ENCODE measurements at regions of chr2 and their contacts with region 1.

Region 1: DNA sequence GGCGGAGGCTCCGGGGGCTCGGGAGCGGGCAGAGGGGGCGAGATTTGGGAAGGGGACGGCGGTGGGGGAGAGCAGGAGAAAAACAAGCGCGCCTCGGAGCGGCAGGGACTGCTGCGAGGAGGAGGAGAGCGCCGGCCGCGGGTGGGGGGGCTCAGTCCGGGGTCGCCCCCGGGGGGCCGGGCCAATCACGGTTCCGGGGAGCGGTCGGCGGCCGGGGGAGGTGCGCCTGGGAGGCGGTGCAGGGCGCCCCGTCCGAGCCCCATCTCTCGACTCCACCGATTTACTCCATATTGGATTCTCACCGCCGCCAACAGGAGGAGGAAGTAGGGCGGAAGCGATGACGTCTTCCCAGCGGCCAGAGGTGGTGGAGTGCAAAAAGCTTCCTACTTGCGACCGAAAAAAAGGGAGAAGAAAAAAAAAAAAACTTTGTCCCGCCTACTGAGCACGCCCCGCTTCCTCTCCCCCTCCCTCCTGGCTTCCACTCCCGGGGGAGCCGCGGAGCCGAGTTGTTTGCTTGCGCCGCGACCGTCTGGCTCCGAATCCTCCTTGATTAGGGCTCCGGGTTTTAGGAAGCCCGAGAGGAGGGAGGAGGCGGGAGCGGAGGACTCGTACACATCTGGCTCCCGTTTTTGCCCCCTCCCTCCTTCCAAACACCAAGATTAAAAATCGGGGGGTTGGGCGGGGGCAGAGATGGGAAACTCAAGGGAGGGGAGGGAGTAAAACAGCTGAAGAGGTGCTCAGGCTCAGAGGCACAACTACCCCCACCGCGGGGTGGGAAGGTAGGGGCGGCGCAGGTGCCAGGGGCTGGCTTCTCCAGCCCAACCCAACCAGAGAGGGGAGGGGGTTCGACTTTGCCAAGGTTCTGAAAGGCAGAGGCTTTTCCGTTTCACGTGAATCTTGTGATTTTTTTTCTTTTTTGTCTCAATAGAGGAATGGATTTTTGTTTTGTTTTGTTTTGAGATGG is at the start of gene SPRED2:
- DNase-seq: peak; percentile 96
- ATAC-seq: peak; percentile 58
- H3K4me3 ChIP-seq: peak within 1 kb of the TSS; percentile 94 to 98 (median 98)
- H3K27ac ChIP-seq: peak within 1 kb of the TSS; percentile 86
- H3K4me1 ChIP-seq: peaks cover 56% of the 10 kb centered on the region
- H3K27me3 ChIP-seq: no peaks in the 10 kb centered on the region
- CTCF ChIP-seq: peak; percentile 13; the same call in 1 of the 2 replicates
- EP300 ChIP-seq: peak; percentile 73 to 82
- POLR2A ChIP-seq: peak; percentile 73 to 82
- RAD21 ChIP-seq: no peak; the same call in 1 of the 2 replicates
- total RNA-seq, gene SPRED2: 13.0 and 17.7 TPM in 2 replicates

Region 2: GRCh38 chr2:65129826-65130663 is 302.5 kb before region 1 on chr2 and contains the start of gene RAB1A:
- CTCF ChIA-PET with region 1: no interaction called
- POLR2A ChIA-PET with region 1: interaction called, 7 read pairs
- in situ Hi-C with region 1: no loop called
- intact Hi-C with region 1: loop called (anchors 1 kb)
- DNase-seq: peak; percentile 99
- ATAC-seq: peak; percentile 98
- H3K4me3 ChIP-seq: peak within 1 kb of the TSS; percentile 89 to 98 (median 97)
- H3K27ac ChIP-seq: peak within 1 kb of the TSS; percentile 95
- H3K4me1 ChIP-seq: peaks cover 69% of the 10 kb centered on the region
- H3K27me3 ChIP-seq: peaks cover 0 to 4% of the 10 kb centered on the region in 2 experiments; a peak in 1 of 5 replicates
- CTCF ChIP-seq: peak; percentile 80
- EP300 ChIP-seq: no peak
- POLR2A ChIP-seq: peak; percentile 88 to 93
- RAD21 ChIP-seq: no peak
- total RNA-seq, gene RAB1A: 206 and 311 TPM in 2 replicates

Region 3: GRCh38 chr2:65264821-65265670 is 167.5 kb before region 1 on chr2:
- CTCF ChIA-PET with region 1: no interaction called
- POLR2A ChIA-PET with region 1: no interaction called
- in situ Hi-C with region 1: no loop called
- intact Hi-C with region 1: loop called (anchors 1 kb)
- DNase-seq: peak; percentile 84
- ATAC-seq: peak; percentile 79
- H3K4me3 ChIP-seq: no peak overlapping the region
- H3K27ac ChIP-seq: no peak overlapping the region
- H3K4me1 ChIP-seq: no peaks in the 10 kb centered on the region
- H3K27me3 ChIP-seq: no peaks in the 10 kb centered on the region
- CTCF ChIP-seq: peak; percentile 87
- EP300 ChIP-seq: no peak
- POLR2A ChIP-seq: no peak
- RAD21 ChIP-seq: peak; percentile 84; the same call in 1 of the 2 replicates

Region 4: DNA sequence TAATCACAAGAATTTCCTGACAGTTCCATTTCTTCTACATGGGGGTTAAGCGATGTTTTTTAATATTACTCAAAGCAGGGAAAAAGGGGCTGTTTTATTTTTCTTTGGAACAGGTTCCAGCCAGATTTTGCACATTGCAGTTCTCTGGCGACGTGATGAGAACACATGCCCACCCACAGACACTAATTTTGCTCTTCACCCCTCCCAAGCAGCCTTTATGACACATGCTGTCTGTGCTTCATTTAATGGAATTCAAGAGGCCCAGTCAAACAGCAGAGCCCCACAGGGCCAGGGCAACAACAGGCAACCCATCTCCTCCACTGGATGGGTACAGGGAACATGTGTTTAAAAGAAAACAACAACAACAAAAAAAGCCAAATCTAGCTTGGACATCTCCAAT is 70.9 kb before region 1 on chr2:
- CTCF ChIA-PET with region 1: no interaction called
- POLR2A ChIA-PET with region 1: interaction called, 13 read pairs
- in situ Hi-C with region 1: no loop called
- intact Hi-C with region 1: loop called (anchors 1 kb)
- DNase-seq: no peak
- ATAC-seq: no peak
- H3K4me3 ChIP-seq: no peak overlapping the region
- H3K27ac ChIP-seq: no peak overlapping the region
- H3K4me1 ChIP-seq: peaks cover 98% of the 10 kb centered on the region
- H3K27me3 ChIP-seq: no peaks in the 10 kb centered on the region
- CTCF ChIP-seq: no peak
- EP300 ChIP-seq: no peak
- POLR2A ChIP-seq: no peak
- RAD21 ChIP-seq: no peak

Region 5: DNA sequence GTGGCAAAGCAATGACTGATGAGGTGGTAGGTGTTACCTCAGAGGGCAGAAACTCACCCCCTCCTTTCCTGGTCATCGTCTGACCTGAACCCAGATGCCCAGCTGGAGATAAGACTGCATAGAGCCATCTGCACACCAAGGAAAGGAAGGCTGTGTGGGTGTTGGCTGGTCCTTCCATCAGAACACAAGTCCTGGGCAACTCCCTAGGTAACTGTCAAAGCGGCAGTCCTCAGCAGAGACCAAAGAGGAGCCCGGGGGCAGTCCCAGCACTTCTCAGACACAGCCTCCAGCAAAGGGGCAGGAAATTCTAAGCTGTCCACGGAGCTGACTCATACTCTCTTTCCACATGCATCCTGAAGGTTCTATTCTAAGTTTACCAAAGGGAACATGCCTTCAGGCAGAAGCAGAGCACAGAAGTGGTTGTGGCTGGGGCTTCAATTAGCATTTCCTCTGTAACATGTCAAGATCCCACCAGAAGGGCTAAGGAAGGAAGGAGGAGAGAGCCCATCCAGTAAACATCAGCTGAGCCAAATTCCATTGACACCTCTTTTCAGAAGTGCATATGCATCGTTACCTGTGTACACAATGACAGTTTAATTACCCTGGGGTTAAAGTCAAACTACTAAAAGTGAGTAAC is 54.8 kb before region 1 on chr2:
- CTCF ChIA-PET with region 1: no interaction called
- POLR2A ChIA-PET with region 1: interaction called, 66 read pairs
- in situ Hi-C with region 1: loop called (anchors 5 kb)
- intact Hi-C with region 1: loop called (anchors 1 kb)
- DNase-seq: no peak
- ATAC-seq: no peak
- H3K4me3 ChIP-seq: no peak overlapping the region
- H3K27ac ChIP-seq: peak overlapping the region; percentile 4
- H3K4me1 ChIP-seq: peaks cover 95% of the 10 kb centered on the region
- H3K27me3 ChIP-seq: no peaks in the 10 kb centered on the region
- CTCF ChIP-seq: no peak
- EP300 ChIP-seq: no peak
- POLR2A ChIP-seq: no peak
- RAD21 ChIP-seq: no peak

Region 6: GRCh38 chr2:65396348-65397026 is 36.0 kb before region 1 on chr2:
- CTCF ChIA-PET with region 1: no interaction called
- POLR2A ChIA-PET with region 1: interaction called, 17 read pairs
- in situ Hi-C with region 1: no loop called
- intact Hi-C with region 1: loop called (anchors 1 kb)
- DNase-seq: peak; percentile 90
- ATAC-seq: peak; percentile 94
- H3K4me3 ChIP-seq: peak overlapping the region in 2 of 3 experiments; percentile 23 to 25; a peak in 4 of 6 replicates
- H3K27ac ChIP-seq: peak overlapping the region; percentile 55
- H3K4me1 ChIP-seq: peaks cover 58% of the 10 kb centered on the region
- H3K27me3 ChIP-seq: no peaks in the 10 kb centered on the region
- CTCF ChIP-seq: no peak
- EP300 ChIP-seq: peak in 1 of 2 experiments; percentile 85; a peak in 2 of 4 replicates
- POLR2A ChIP-seq: no peak
- RAD21 ChIP-seq: no peak

Region 7: GRCh38 chr2:65483763-65484162 is 51.3 kb after region 1 on chr2:
- CTCF ChIA-PET with region 1: no interaction called
- POLR2A ChIA-PET with region 1: interaction called, 6 read pairs
- in situ Hi-C with region 1: no loop called
- intact Hi-C with region 1: loop called (anchors 2 kb)
- DNase-seq: peak; percentile 29
- ATAC-seq: no peak; the same call in 2 of the 3 replicates
- H3K4me3 ChIP-seq: no peak overlapping the region
- H3K27ac ChIP-seq: no peak overlapping the region
- H3K4me1 ChIP-seq: peaks cover 38% of the 10 kb centered on the region
- H3K27me3 ChIP-seq: no peaks in the 10 kb centered on the region
- CTCF ChIP-seq: no peak
- EP300 ChIP-seq: no peak
- POLR2A ChIP-seq: no peak
- RAD21 ChIP-seq: no peak